Gastrocnemius medialis (tissue), 4 donors: ENCODE measurements at regions of chr9 and their contacts with region 1.

Region 1: GRCh38 chr9:116149844-116150243 is 3.7 kb upstream of the PAPPA start:
- DNase-seq: peak in 1 of 2 donors; percentile 25
- ATAC-seq: peak in 1 of 2 donors; percentile 68
- H3K4me3 ChIP-seq: no peak overlapping the region
- H3K27ac ChIP-seq: no peak overlapping the region
- H3K4me1 ChIP-seq: peaks cover 0 to 6% of the 10 kb centered on the region in 2 donors
- H3K27me3 ChIP-seq: peaks cover 0 to 13% (median 0%) of the 10 kb centered on the region in 3 donors
- CTCF ChIP-seq: peak; percentile 24 to 64 (median 54)
- POLR2A ChIP-seq: no peak

Region 2: GRCh38 chr9:116318468-116319374 is 168.9 kb after region 1 on chr9:
- in situ Hi-C with region 1: no loop called
- intact Hi-C with region 1: loop called (anchors 10 kb)
- DNase-seq: peak; percentile 34 to 59
- ATAC-seq: peak; percentile 52 to 67
- H3K4me3 ChIP-seq: no peak overlapping the region
- H3K27ac ChIP-seq: peak overlapping the region; percentile 42 to 60 (median 49)
- H3K4me1 ChIP-seq: no peaks in the 10 kb centered on the region
- H3K27me3 ChIP-seq: no peaks in the 10 kb centered on the region
- CTCF ChIP-seq: no peak
- POLR2A ChIP-seq: no peak

Region 3: DNA sequence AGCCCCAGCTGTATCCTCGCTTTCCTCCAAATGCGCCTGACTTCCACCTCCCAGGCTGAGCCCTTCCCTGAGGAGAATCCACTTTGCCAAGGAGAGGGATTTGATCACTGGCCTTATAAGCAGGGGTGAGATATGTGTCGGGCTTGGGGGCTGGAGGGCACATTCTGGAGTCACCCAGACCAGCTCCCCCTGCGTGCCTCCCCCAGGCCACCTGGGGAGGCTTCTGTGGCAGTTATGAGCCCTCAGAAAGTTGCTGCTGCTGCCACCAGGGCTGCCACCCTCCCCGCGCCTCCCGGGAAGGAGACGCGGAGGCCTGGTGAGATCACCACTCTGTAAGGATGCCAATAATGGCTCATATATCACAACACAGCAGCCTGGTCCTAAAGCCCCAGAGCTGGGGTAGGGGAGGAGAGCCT is 215.2 kb after region 1 on chr9:
- in situ Hi-C with region 1: loop called in 1 of 4 experiments (anchors 25 kb)
- intact Hi-C with region 1: loop called (anchors 10 kb)
- DNase-seq: peak; percentile 61 to 74
- ATAC-seq: peak; percentile 86 to 89
- H3K4me3 ChIP-seq: peak overlapping the region in 2 of 4 donors; percentile 18 to 21
- H3K27ac ChIP-seq: peak overlapping the region; percentile 24 to 69 (median 54)
- H3K4me1 ChIP-seq: peaks cover 39 to 40% of the 10 kb centered on the region in 2 donors
- H3K27me3 ChIP-seq: no peaks in the 10 kb centered on the region
- CTCF ChIP-seq: peak in 2 of 5 experiments; percentile 27 to 45
- POLR2A ChIP-seq: no peak

Region 4: DNA sequence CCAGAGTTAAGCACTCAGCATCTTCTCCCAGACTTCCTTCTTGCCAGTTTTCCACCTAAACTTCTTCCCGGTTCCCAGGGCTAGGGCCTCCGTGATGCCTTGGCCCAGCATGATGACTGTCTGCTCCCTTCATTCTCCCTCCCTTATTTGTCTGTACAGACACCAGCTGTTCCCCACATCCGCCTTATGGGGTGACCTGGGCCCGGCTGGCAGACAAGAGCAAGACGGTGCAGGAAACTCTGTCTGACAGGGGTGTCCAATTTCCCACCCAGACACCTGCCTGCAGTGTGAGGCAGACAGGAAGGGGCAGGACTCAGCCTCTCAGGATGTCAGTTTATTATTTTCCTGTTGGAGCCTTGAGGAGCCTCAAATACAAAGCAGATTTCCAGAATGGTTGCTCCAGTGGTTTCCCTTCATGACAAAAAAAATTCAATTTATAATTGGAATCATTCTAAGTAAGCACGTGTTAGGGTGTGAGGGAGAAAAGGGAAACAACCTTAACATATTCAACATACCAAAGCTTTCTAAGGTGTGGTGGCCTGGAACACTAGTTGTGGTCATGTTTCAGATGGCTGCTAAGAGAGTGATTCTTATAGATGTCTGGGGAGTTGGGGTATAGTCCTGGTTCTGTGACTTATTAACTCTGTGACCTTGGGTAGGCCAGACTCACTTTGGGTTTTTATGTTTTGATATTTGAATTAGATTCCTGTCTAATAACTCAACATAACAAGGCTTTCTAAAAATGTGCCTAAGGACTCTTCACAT is 238.3 kb after region 1 on chr9:
- in situ Hi-C with region 1: no loop called
- intact Hi-C with region 1: no loop called
- DNase-seq: no peak
- ATAC-seq: no peak
- H3K4me3 ChIP-seq: no peak overlapping the region
- H3K27ac ChIP-seq: no peak overlapping the region
- H3K4me1 ChIP-seq: no peaks in the 10 kb centered on the region
- H3K27me3 ChIP-seq: no peaks in the 10 kb centered on the region
- CTCF ChIP-seq: no peak
- POLR2A ChIP-seq: no peak

Region 5: DNA sequence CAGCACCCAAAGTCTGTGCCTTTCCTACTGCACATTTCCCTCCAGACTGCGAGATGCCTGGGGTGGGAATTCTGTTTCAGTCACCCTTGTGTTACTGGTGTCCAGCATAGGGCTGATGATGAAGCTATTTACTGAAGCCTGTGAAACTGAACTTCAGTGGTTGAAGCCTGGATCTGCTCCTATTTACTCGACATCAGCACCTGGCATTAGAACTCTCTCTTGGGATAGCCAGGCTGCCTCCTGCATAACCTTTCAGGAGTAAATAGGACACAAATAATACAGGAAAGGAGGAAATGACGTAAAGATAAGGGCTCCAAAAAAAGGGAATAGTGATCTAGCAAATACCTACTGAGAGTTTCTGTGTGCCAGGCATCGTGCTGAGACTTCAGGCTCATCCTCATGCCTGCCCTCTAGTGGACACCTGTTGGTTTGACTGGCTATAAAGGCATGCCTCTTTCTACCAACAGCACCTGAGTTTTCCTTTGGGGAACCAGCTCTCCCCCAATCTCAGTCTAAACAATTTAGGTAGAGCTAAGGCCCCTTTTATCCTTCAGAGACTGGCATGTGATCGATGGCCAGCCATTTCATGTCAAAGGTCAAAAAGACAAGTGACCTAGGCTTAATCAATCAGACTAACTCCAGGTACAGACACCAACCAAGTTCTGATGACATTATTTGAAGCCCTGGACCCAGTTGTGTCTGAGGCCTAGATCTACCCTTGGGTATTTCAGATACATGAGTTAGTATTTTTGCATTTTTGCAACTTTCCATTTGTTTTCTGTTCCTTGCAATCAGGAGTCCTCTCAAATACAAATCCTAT is 345.2 kb after region 1 on chr9:
- in situ Hi-C with region 1: no loop called
- intact Hi-C with region 1: loop called (anchors 10 kb)
- DNase-seq: no peak
- ATAC-seq: peak; percentile 39 to 78
- H3K4me3 ChIP-seq: no peak overlapping the region
- H3K27ac ChIP-seq: no peak overlapping the region
- H3K4me1 ChIP-seq: no peaks in the 10 kb centered on the region
- H3K27me3 ChIP-seq: no peaks in the 10 kb centered on the region
- CTCF ChIP-seq: peak; percentile 46 to 71 (median 58)
- POLR2A ChIP-seq: no peak

Region 6: GRCh38 chr9:116589392-116590354 is 439.8 kb after region 1 on chr9:
- in situ Hi-C with region 1: loop called in 1 of 4 experiments (anchors 25 kb)
- intact Hi-C with region 1: no loop called
- DNase-seq: no peak
- ATAC-seq: peak in 1 of 2 donors; percentile 75
- H3K4me3 ChIP-seq: no peak overlapping the region
- H3K27ac ChIP-seq: no peak overlapping the region
- H3K4me1 ChIP-seq: peaks cover 0 to 11% of the 10 kb centered on the region in 2 donors
- H3K27me3 ChIP-seq: no peaks in the 10 kb centered on the region
- CTCF ChIP-seq: peak in 3 of 5 experiments; percentile 31 to 45 (median 37)
- POLR2A ChIP-seq: no peak